AG04450 (cell line): ENCODE measurements at regions of chr6 and their contacts with region 1.

Region 1: DNA sequence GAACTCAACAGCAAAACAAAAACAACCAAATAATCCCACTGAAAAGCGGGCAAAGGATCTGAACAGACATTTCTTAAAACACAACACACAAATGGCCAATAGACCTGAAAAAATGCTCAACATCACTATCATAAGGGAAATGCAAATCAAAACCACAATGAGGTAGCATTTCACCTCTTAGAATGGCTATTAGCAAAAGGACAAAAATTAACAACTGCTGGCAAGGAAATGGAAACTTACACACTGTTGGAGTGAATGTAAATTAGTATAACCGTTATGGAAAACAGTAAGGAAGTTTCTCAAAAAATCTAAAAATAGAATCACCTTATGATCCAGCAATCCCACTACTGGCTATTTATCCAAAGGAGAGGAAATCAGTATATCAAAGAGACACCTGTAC is 20.9 kb downstream of the FAM8A1 start:
- DNase-seq: no peak
- H3K4me3 ChIP-seq: no peak overlapping the region
- H3K27ac ChIP-seq: no peak overlapping the region
- H3K27me3 ChIP-seq: no peaks in the 10 kb centered on the region
- CTCF ChIP-seq: no peak

Region 2: GRCh38 chr6:16999491-17000436 is 621.2 kb before region 1 on chr6:
- CTCF ChIA-PET with region 1: no interaction called
- POLR2A ChIA-PET with region 1: no interaction called
- DNase-seq: peak; percentile 65
- H3K4me3 ChIP-seq: no peak overlapping the region
- H3K27ac ChIP-seq: no peak overlapping the region
- H3K27me3 ChIP-seq: no peaks in the 10 kb centered on the region
- CTCF ChIP-seq: no peak

Region 3: DNA sequence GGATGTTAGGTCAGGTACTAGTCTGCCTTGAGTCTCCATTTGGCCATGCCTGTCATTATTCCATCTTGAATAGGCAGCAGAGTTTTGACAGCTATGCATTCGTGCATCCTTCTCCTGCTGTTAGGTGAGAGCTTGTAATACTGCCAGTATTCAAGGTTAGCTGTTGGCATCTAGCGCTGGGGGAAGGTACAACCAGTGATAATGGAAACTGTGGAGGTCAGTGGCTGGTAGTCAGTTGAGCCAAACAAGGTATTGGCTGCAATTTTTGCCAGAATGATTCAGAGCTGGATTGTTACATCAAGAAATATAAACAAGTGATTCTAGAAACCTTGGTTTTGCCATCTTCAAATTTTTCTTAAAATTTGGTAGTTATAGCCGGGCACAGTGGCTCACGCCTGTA is 14.4 kb before region 1 on chr6:
- CTCF ChIA-PET with region 1: no interaction called
- POLR2A ChIA-PET with region 1: interaction called, 12 read pairs
- DNase-seq: no peak
- H3K4me3 ChIP-seq: no peak overlapping the region
- H3K27ac ChIP-seq: no peak overlapping the region
- H3K27me3 ChIP-seq: no peaks in the 10 kb centered on the region
- CTCF ChIP-seq: no peak

Region 4: GRCh38 chr6:17741507-17741906 is 120.5 kb after region 1 on chr6:
- CTCF ChIA-PET with region 1: no interaction called
- POLR2A ChIA-PET with region 1: no interaction called
- DNase-seq: no peak
- H3K4me3 ChIP-seq: no peak overlapping the region
- H3K27ac ChIP-seq: no peak overlapping the region
- H3K27me3 ChIP-seq: no peaks in the 10 kb centered on the region
- CTCF ChIP-seq: no peak